ENCODE measurements at regions of chr14 and their contacts with region 1.

Region 1: DNA sequence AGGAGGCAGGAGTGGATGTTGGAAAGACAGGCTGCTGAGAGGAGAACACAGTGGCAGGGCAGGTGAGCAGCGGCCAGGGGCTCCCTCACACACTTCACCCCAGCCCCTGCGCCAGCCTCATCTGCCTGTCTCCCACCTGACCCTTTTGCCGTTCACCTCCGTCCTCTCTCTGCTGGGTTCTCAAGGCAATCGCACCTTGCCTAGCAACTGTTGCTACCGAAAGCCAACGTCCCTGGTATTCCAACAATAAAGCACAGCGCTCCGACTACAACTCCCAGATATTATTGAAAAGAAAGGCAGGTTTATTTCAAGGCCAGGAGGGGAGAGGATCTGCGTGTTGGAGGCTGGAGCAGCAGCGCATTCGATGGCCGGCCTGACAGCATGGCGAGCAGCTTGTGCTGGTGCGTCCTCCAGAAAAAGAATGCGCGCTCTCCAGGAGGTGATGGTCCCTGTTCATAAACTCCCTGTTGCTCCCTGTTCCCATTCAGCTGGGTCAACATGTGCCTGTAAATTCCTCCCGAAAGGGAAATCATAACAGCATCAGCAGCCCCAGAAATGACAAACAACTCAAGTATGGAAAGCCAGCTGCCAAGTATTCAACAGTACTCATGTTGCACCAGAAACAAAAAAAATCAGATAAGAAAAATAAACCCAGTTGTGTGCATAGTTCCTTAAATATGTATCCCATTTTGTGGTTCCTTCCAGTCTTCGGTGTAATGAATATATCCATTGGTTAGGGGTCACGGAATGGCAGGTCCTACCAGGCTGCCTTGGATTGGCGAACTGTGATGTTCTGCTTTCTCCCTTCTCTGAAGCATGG is 153.0 kb upstream of the DIO3 start:
- DNase-seq: no peak
- H3K4me3 ChIP-seq: no peak overlapping the region
- H3K27ac ChIP-seq: peak overlapping the region; percentile 78
- H3K4me1 ChIP-seq: peaks cover 66% of the 10 kb centered on the region
- H3K27me3 ChIP-seq: no peaks in the 10 kb centered on the region
- CTCF ChIP-seq: no peak
- POLR2A ChIP-seq: no peak

Region 2: DNA sequence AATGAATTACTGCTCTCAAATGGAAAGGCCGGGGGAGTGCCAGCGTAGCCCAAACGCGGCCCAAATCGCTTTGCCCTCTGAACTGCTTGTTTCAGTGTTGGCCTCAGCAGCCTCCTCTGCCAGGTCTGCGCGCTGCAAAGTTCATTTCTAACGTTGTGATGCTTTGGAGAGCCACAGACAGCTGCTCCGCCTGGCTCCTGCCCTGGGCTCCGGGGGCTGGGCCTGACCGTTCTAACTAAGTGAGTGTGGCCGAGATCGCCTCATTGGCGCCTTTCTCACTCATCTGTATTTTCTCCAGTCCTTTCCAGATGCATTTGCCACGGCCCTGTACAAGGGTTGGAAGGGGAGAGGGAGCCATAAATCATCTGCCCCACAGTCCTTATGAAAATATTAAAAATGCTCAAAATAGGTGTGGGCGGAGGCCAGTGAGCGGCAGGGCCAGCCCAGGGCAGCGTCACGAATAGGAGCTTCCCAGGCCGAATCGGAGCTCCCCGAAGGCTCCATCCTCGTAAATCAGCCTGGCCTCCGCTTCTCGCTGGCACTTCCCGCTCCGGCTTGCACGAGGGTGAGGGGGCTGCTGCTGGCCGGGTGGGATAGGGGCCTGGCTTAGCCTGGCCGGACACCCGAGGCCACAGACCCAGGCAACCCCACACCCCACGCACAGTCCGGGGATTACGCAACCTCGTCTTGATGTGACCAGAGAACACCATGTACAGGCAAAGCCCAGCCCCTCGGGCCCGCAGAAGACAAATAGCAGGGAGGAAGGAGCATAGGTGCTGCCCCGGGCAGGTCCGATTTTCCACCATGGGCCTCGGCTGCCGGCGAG is 43.6 kb before region 1 on chr14:
- intact Hi-C with region 1: loop called (anchors 5 kb)
- DNase-seq: peak; percentile 94 to 98
- H3K4me3 ChIP-seq: peak overlapping the region in 1 of 2 donors; percentile 4
- H3K27ac ChIP-seq: peak overlapping the region; percentile 83
- H3K4me1 ChIP-seq: peaks cover 65% of the 10 kb centered on the region
- H3K27me3 ChIP-seq: no peaks in the 10 kb centered on the region
- CTCF ChIP-seq: no peak
- POLR2A ChIP-seq: no peak

Region 3: GRCh38 chr14:101458526-101459391 is 50.5 kb after region 1 on chr14:
- intact Hi-C with region 1: no loop called
- DNase-seq: no peak
- H3K4me3 ChIP-seq: peak overlapping the region; percentile 20 to 44
- H3K27ac ChIP-seq: no peak overlapping the region
- H3K4me1 ChIP-seq: no peaks in the 10 kb centered on the region
- H3K27me3 ChIP-seq: no peaks in the 10 kb centered on the region
- CTCF ChIP-seq: no peak
- POLR2A ChIP-seq: no peak

Measured in vagina (tissue), 2 donors.